ENCODE measurements at regions of chr1 and their contacts with region 1.

Region 1: GRCh38 chr1:95043141-95043980 is 29.4 kb downstream of the ALG14 start:
- DNase-seq: peak; percentile 55 to 82 (median 62)
- H3K4me3 ChIP-seq: no peak overlapping the region
- H3K4me3 Mint-ChIP-seq: no peak overlapping the region
- H3K27ac ChIP-seq: no peak overlapping the region
- H3K27ac Mint-ChIP-seq: no peak overlapping the region
- H3K4me1 ChIP-seq: no peaks in the 10 kb centered on the region
- H3K4me1 Mint-ChIP-seq: no peaks in the 10 kb centered on the region
- H3K27me3 ChIP-seq: no peaks in the 10 kb centered on the region
- H3K27me3 Mint-ChIP-seq: no peaks in the 10 kb centered on the region

Region 2: GRCh38 chr1:94597701-94598100 is 445.7 kb before region 1 on chr1:
- CTCF ChIA-PET with region 1: no interaction called
- POLR2A ChIA-PET with region 1: no interaction called
- DNase-seq: no peak
- H3K4me3 ChIP-seq: no peak overlapping the region
- H3K4me3 Mint-ChIP-seq: no peak overlapping the region
- H3K27ac ChIP-seq: no peak overlapping the region
- H3K27ac Mint-ChIP-seq: no peak overlapping the region
- H3K4me1 ChIP-seq: no peaks in the 10 kb centered on the region
- H3K4me1 Mint-ChIP-seq: peaks cover 11 to 12% (median 11%) of the 10 kb centered on the region in 3 donors
- H3K27me3 ChIP-seq: no peaks in the 10 kb centered on the region
- H3K27me3 Mint-ChIP-seq: peaks cover 5% of the 10 kb centered on the region in 2 donors

Region 3: GRCh38 chr1:94854458-94855306 is 188.7 kb before region 1 on chr1:
- CTCF ChIA-PET with region 1: interaction called, 27 read pairs
- POLR2A ChIA-PET with region 1: no interaction called
- DNase-seq: peak; percentile 50 to 79 (median 68)
- H3K4me3 ChIP-seq: peak overlapping the region; percentile 55
- H3K4me3 Mint-ChIP-seq: no peak overlapping the region
- H3K27ac ChIP-seq: no peak overlapping the region
- H3K27ac Mint-ChIP-seq: no peak overlapping the region
- H3K4me1 ChIP-seq: no peaks in the 10 kb centered on the region
- H3K4me1 Mint-ChIP-seq: no peaks in the 10 kb centered on the region
- H3K27me3 ChIP-seq: no peaks in the 10 kb centered on the region
- H3K27me3 Mint-ChIP-seq: peaks cover 7 to 11% of the 10 kb centered on the region in 2 donors